ENCODE measurements at regions of chr3 and their contacts with region 1.

Region 1: DNA sequence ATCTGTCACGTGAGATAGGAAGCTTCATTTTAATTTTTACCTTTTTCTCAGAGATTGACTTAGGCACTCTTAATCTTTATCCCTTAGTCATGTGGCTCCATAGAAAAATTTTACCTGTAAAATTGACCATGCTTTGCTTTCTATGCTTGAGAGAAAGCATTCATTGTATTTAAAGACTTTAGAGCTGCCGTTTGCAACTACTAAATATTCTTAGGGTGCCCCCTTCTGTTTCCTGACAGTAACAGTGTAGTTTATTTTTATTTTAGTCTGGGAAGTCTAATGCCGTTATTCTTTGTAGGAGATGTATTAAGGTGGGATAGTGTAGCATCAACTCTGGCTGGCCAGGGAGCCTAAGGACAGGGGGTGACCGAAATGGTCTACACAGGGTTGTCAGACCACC is 84.5 kb upstream of the SYNPR start:
- DNase-seq: no peak
- H3K4me3 ChIP-seq: no peak overlapping the region
- H3K27ac ChIP-seq: no peak overlapping the region
- H3K4me1 ChIP-seq: no peaks in the 10 kb centered on the region
- H3K27me3 ChIP-seq: no peaks in the 10 kb centered on the region
- CTCF ChIP-seq: peak in 5 of 6 experiments; percentile 11 to 53 (median 49)
- POLR2A ChIP-seq: no peak

Region 2: DNA sequence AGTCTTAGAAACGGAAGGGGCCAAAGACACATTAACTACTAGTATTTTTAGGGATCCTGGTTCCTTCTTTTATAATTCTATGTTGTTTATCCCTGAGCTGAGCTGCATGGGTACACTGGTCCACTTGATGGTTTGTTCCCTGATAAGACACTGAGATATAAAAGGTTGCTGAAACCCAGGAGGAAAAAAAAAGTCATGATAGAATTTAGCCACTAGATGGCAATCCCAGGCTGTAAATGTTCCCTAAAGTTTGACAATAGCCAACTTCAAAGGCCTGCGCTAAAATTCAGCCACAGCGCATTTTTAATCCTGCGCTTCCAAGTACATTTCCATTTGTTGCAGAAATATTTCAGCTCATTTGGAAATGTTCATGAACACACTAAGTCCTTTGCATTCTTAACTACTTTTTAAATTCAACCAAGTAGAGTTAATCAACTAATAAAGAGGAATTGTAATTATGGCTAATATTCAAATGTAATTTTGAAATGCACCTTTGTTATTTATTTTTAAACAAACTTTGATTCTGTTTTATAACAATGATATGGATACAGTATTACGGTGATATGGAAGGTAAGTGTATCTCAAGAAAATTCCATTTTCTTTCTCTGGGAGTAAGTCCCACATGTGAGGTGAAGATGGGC is 571.0 kb before region 1 on chr3:
- intact Hi-C with region 1: loop called in 1 of 2 experiments (anchors 10 kb)
- DNase-seq: peak in 4 of 7 donors; percentile 12 to 59 (median 24)
- H3K4me3 ChIP-seq: no peak overlapping the region
- H3K27ac ChIP-seq: no peak overlapping the region
- H3K4me1 ChIP-seq: no peaks in the 10 kb centered on the region
- H3K27me3 ChIP-seq: peaks cover 3% of the 10 kb centered on the region
- CTCF ChIP-seq: peak; percentile 55 to 72 (median 70)
- POLR2A ChIP-seq: no peak

Region 3: DNA sequence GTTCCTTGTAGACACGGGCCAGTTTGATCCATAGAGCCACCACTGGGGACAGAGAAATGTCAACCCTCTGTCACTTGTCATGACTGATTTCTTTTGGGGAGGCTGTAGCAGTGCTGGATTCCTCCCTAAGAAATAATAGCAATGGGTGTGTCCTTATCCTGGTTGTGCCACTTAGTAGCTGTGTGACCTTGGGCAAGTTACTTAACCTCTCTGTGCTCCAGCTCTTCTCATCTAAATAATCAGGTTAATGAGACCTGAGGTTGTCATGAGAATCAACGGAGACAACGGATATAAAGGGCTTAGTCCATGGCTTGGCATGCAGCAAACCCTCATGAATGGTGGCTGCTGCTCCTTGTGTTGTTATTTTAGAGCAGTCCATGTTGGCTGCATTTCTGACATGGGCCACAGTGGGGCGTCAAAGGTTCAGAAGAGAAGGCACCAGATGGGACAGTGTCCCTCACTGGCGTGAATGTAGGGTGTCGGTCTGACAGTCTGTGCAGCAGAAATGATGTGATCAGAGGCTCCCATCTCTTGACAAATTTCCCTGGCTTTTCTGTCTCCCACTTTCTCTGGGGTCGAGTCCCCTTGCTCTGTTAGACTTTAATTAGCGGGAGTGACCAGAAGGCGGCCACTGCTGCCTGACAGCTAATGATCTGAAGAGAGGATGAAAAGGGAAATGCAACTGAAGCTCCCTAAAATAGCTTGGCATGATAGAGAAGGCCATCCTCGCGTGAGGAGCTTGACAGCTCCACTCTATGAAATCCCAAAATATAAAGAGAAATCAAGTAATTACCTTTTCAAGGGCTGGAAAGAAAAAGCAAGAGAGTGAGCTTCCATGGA is 527.8 kb before region 1 on chr3:
- intact Hi-C with region 1: loop called in 1 of 2 experiments (anchors 10 kb)
- DNase-seq: peak; percentile 49 to 93 (median 67)
- H3K4me3 ChIP-seq: no peak overlapping the region
- H3K27ac ChIP-seq: no peak overlapping the region
- H3K4me1 ChIP-seq: no peaks in the 10 kb centered on the region
- H3K27me3 ChIP-seq: peaks cover 5% of the 10 kb centered on the region
- CTCF ChIP-seq: peak; percentile 40 to 75 (median 69)
- POLR2A ChIP-seq: no peak